ENCODE measurements at regions of chr1 and their contacts with region 1.

Region 1: GRCh38 chr1:207797229-207797961 is 45.5 kb downstream of the CD46 start:
- DNase-seq: peak; percentile 86
- ATAC-seq: peak; percentile 86
- H3K4me3 Mint-ChIP-seq: no peak overlapping the region
- H3K27ac Mint-ChIP-seq: no peak overlapping the region
- H3K4me1 Mint-ChIP-seq: peaks cover 41% of the 10 kb centered on the region
- H3K27me3 Mint-ChIP-seq: no peaks in the 10 kb centered on the region

Region 2: DNA sequence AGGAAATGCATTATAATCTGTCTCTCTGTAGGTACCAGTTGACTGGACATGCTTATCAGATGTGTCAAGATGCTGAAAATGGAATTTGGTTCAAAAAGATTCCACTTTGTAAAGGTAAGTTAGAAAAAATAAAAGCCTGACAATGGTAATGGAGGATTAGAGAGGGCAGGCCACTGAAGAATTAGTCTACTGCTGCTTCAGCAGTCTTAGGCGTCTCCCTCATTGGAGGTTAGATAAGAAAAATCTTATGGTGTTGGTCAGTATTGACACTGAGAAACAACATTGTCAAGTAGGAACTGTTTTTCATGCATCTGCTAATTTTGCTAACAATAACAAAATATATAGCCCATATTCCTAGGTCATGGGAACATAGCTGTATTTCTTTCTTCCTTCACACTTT is 323.2 kb before region 1 on chr1:
- CTCF ChIA-PET with region 1: no interaction called
- POLR2A ChIA-PET with region 1: no interaction called
- DNase-seq: no peak
- ATAC-seq: no peak
- H3K4me3 Mint-ChIP-seq: no peak overlapping the region
- H3K27ac Mint-ChIP-seq: no peak overlapping the region
- H3K4me1 Mint-ChIP-seq: peaks cover 16% of the 10 kb centered on the region
- H3K27me3 Mint-ChIP-seq: no peaks in the 10 kb centered on the region

Region 3: DNA sequence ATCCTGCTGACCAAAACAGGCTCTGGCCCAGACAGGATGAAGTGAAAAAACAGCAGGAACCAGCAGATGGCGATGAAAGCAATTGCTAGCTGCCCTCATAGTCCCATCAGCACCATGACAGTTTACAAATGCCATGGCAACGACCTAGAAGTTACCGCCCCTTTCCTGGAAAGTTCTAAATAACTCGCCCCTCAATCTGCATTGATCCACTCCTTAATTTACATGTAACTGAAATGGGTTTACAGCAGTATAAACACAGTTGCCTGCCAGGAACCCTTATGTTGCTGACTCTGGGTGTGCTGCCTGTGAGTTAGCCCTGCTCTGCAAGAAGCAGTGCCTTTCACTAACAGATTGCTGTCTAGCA is 218.0 kb before region 1 on chr1:
- CTCF ChIA-PET with region 1: interaction called, 29 read pairs
- POLR2A ChIA-PET with region 1: interaction called, 3 read pairs
- DNase-seq: peak; percentile 67
- ATAC-seq: peak; percentile 90
- H3K4me3 Mint-ChIP-seq: no peak overlapping the region
- H3K27ac Mint-ChIP-seq: no peak overlapping the region
- H3K4me1 Mint-ChIP-seq: peaks cover 6% of the 10 kb centered on the region
- H3K27me3 Mint-ChIP-seq: peaks cover 25% of the 10 kb centered on the region

Region 4: DNA sequence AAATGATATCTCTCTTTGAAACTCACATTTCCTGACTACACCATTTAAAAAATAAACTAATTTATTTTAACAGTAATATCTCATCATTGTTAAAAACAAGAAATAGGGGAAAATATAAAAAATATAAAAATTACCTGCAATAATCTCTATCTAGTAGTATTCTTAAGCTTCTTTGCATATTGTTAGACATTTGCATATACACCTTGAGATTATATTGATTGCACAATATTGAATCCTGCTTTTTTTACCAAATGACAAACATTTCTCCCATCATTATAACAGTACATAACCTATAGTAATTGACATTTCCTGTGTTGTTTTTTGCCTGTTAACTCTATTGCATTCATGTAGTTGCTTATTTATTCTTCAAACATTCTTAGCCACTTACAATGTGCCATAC is 164.2 kb before region 1 on chr1:
- CTCF ChIA-PET with region 1: no interaction called
- POLR2A ChIA-PET with region 1: no interaction called
- DNase-seq: no peak
- ATAC-seq: no peak
- H3K4me3 Mint-ChIP-seq: no peak overlapping the region
- H3K27ac Mint-ChIP-seq: no peak overlapping the region
- H3K4me1 Mint-ChIP-seq: no peaks in the 10 kb centered on the region
- H3K27me3 Mint-ChIP-seq: peaks cover 5% of the 10 kb centered on the region

Region 5: GRCh38 chr1:207698822-207699483 is 98.4 kb before region 1 on chr1:
- CTCF ChIA-PET with region 1: interaction called, 16 read pairs
- POLR2A ChIA-PET with region 1: no interaction called
- DNase-seq: peak; percentile 55
- ATAC-seq: no peak
- H3K4me3 Mint-ChIP-seq: no peak overlapping the region
- H3K27ac Mint-ChIP-seq: no peak overlapping the region
- H3K4me1 Mint-ChIP-seq: no peaks in the 10 kb centered on the region
- H3K27me3 Mint-ChIP-seq: peaks cover 12% of the 10 kb centered on the region

Region 6: GRCh38 chr1:207751790-207752455 is 45.5 kb before region 1 on chr1 and contains the start of gene CD46:
- CTCF ChIA-PET with region 1: interaction called, 21 read pairs
- POLR2A ChIA-PET with region 1: no interaction called
- DNase-seq: peak; percentile 96
- ATAC-seq: peak; percentile 98
- H3K4me3 Mint-ChIP-seq: peak within 1 kb of the TSS; percentile 100
- H3K27ac Mint-ChIP-seq: peak within 1 kb of the TSS; percentile 96
- H3K4me1 Mint-ChIP-seq: peaks cover 68% of the 10 kb centered on the region
- H3K27me3 Mint-ChIP-seq: no peaks in the 10 kb centered on the region
- total RNA-seq, gene CD46: 94.1 to 98.3 TPM

Region 7: DNA sequence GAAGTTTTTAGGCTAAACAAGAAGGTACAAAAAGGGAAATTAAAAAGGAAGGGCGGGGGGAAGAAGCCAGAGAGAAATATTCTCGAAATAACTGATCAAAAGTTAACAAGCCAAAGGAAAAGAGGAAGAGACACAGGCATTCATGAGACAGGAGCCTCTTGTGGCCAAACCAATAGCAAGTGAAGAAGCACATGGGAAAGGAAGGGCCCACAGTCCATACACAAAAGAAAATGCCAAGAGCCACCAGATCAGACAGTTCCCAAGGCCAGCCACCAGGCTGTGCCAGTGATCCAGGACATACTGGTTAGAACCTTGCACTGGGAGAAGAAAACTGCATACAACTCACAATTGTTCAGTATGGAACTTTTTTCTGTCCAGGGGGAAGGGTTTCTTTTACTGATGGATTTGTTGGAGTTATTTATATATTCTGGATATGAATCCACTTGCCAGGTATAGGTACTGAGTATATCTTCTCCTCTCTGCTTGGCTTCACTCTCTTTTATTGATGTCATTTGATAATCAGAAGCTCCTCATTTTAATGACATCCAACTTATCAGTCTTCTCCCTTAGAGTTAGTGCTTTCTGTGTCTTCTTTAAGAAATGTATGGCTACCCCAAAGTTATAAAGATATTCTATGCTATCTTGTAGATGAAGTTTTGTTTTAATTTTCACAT is 31.2 kb after region 1 on chr1:
- CTCF ChIA-PET with region 1: interaction called, 45 read pairs
- POLR2A ChIA-PET with region 1: interaction called, 3 read pairs
- DNase-seq: peak; percentile 64
- ATAC-seq: no peak
- H3K4me3 Mint-ChIP-seq: no peak overlapping the region
- H3K27ac Mint-ChIP-seq: no peak overlapping the region
- H3K4me1 Mint-ChIP-seq: peaks cover 86% of the 10 kb centered on the region
- H3K27me3 Mint-ChIP-seq: no peaks in the 10 kb centered on the region

Region 8: GRCh38 chr1:207876131-207876530 is 78.7 kb after region 1 on chr1:
- CTCF ChIA-PET with region 1: interaction called, 10 read pairs
- POLR2A ChIA-PET with region 1: no interaction called
- DNase-seq: no peak
- ATAC-seq: no peak
- H3K4me3 Mint-ChIP-seq: no peak overlapping the region
- H3K27ac Mint-ChIP-seq: no peak overlapping the region
- H3K4me1 Mint-ChIP-seq: peaks cover 52% of the 10 kb centered on the region
- H3K27me3 Mint-ChIP-seq: no peaks in the 10 kb centered on the region

Region 9: DNA sequence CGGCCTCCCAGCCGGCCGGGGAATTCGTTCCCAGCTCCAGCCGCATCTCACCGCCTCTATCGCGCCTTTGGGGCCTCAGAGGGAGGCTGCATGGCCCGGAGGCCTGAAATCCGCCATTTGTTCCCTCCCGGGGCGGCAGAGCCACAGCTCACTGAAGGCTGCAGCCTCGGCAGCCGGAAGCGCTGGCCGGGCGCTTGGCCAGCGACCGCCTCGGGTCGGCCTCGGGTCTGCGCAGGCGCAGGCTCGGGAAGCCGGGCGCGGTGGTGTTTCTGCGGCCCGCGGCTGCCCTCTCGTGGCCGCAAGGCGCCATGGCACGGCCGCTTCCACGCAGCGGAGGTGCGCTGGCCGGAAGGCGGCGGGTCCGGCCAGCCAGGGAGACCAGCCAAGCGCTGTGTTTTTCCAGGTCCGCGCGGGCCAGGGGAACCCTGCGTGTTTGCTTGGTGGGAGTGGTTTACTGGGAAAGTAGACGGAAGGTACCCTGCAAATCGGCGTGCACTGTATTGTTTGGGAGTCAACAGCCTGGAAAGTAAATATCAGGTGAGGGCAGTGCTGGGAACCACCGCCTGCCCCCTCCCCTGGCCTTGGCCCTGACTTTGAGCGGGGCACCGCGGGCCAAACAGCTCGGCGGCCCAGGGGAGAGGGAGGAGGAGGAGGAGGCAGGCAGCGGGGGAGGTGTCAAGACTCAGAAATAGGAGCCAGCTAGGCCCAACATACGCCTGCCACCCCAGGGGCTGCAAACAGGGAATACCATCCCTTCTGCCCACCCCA is 166.2 kb after region 1 on chr1:
- CTCF ChIA-PET with region 1: interaction called, 61 read pairs
- POLR2A ChIA-PET with region 1: no interaction called
- DNase-seq: peak; percentile 85
- ATAC-seq: peak; percentile 78
- H3K4me3 Mint-ChIP-seq: peak overlapping the region; percentile 77
- H3K27ac Mint-ChIP-seq: peak overlapping the region; percentile 64
- H3K4me1 Mint-ChIP-seq: peaks cover 15% of the 10 kb centered on the region
- H3K27me3 Mint-ChIP-seq: peaks cover 32% of the 10 kb centered on the region

Region 10: DNA sequence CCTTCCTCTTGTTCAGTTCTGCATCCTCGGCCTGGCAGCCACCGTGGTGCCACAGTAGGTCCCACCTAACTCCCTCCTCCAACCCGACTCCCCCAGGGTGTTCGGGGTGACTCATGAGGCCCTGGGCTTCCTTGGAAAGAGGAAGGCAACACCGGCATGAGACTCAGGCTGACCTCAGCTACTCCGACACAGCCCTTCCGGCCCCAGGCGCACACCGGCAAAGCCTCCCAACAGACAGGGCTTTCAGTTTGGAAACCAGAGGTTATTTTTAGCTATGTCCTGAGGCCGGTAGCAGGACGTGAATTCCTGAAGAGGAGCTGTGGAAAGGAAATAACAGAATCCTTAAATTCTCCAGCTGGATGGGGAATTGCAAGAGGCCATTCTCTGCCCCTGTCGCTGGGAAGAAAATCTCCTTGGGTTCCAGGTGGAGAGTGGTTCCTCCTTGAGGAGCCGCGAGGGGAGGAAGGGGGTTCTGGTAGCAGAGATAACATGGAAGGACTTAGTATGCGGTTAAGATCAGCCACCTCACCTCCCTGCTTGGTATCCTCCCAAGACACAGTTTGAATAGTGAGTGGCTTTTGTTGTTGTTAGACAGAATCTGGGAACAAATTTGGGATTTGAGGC is 422.4 kb after region 1 on chr1:
- CTCF ChIA-PET with region 1: no interaction called
- POLR2A ChIA-PET with region 1: no interaction called
- DNase-seq: no peak
- ATAC-seq: no peak
- H3K4me3 Mint-ChIP-seq: no peak overlapping the region
- H3K27ac Mint-ChIP-seq: no peak overlapping the region
- H3K4me1 Mint-ChIP-seq: no peaks in the 10 kb centered on the region
- H3K27me3 Mint-ChIP-seq: peaks cover 22% of the 10 kb centered on the region

Measured in activated CD8-positive, alpha-beta T cell treated with anti-CD3 and anti-CD28 coated beads, Interleukin-2, amount 10 ng/mL, durations not matched to agents 7 days and 5 days (primary cell).